Aorta (tissue), 5 donors: ENCODE measurements at regions of chr18 and their contacts with region 1.

Region 1: GRCh38 chr18:37985126-37985525 is 419.5 kb upstream of the CELF4 start:
- DNase-seq: no peak
- ATAC-seq: peak; percentile 26
- H3K4me3 ChIP-seq: no peak overlapping the region
- H3K27ac ChIP-seq: no peak overlapping the region
- H3K4me1 ChIP-seq: no peaks in the 10 kb centered on the region
- H3K27me3 ChIP-seq: no peaks in the 10 kb centered on the region

Region 2: GRCh38 chr18:38047820-38048219 is 62.7 kb after region 1 on chr18:
- intact Hi-C with region 1: loop called in 1 of 2 experiments (anchors 10 kb)
- DNase-seq: no peak
- ATAC-seq: no peak
- H3K4me3 ChIP-seq: no peak overlapping the region
- H3K27ac ChIP-seq: no peak overlapping the region
- H3K4me1 ChIP-seq: no peaks in the 10 kb centered on the region
- H3K27me3 ChIP-seq: no peaks in the 10 kb centered on the region